Right cardiac atrium (tissue), 5 donors: ENCODE measurements at regions of chr5 and their contacts with region 1.

Region 1: GRCh38 chr5:671459-672328 is 21.5 kb downstream of the TPPP start:
- DNase-seq: peak; percentile 83 to 93 (median 92)
- ATAC-seq: peak; percentile 78 to 82
- H3K4me3 ChIP-seq: no peak overlapping the region
- H3K27ac ChIP-seq: no peak overlapping the region
- H3K4me1 ChIP-seq: peaks cover 7% of the 10 kb centered on the region
- H3K27me3 ChIP-seq: no peaks in the 10 kb centered on the region

Region 2: DNA sequence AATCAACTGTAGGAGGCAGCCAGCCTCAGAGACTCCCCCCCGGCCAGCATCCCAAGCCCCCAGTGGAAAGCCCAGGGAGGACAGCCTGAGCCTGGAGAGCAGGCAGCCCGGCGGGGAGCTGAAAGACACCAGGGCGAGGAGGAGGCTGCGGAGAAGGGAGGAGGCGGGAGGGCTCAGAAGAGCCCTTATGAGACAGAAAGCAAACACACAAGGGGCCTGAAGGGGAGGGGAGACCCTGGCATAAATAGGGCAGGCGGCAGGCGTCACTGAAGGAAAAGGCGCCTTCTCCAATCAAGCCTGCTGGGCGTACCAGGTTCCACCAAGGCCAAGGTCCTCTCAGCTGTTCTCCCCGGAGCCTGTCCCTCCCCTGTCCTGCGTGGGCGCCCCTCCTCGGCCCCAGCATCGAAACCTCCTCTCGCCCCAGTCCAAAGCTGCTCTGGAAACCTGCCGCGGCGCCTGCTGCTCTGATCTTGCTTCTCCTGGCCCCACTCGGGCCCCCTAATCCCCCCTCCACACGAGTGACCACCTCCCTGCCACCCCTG is 148.7 kb before region 1 on chr5:
- intact Hi-C with region 1: no loop called
- DNase-seq: peak in 2 of 3 donors; percentile 34 to 49
- ATAC-seq: no peak
- H3K4me3 ChIP-seq: peak overlapping the region; percentile 21
- H3K27ac ChIP-seq: no peak overlapping the region
- H3K4me1 ChIP-seq: no peaks in the 10 kb centered on the region
- H3K27me3 ChIP-seq: no peaks in the 10 kb centered on the region

Region 3: DNA sequence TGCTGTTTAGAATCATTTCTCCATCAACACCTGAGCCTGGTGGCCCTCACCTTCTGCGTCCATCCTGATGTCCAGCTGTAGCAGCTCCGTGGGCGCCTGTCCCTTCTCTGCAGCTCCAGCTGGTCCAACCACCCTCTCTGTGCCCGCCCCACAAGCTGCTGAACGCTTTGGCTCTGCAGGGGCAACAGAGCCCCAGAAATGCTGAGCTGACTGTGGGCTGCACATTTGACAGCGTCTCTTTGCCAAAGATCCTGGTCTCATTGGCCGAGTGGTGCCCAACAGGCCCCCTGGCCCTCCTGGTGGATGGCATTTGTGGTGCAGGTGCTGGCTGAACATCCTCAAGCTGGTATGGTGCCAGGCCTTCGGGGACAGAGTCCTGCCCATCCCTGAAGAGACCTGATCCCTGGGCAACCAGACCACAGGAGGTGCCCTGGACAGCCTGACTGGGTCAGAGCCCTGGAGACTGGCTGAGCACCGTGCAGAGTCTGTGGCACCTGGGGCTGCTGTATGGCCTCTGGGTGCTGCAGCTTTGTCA is 84.9 kb before region 1 on chr5:
- intact Hi-C with region 1: no loop called
- DNase-seq: no peak
- ATAC-seq: peak in 1 of 2 donors; percentile 11
- H3K4me3 ChIP-seq: no peak overlapping the region
- H3K27ac ChIP-seq: no peak overlapping the region
- H3K4me1 ChIP-seq: no peaks in the 10 kb centered on the region
- H3K27me3 ChIP-seq: no peaks in the 10 kb centered on the region

Region 4: DNA sequence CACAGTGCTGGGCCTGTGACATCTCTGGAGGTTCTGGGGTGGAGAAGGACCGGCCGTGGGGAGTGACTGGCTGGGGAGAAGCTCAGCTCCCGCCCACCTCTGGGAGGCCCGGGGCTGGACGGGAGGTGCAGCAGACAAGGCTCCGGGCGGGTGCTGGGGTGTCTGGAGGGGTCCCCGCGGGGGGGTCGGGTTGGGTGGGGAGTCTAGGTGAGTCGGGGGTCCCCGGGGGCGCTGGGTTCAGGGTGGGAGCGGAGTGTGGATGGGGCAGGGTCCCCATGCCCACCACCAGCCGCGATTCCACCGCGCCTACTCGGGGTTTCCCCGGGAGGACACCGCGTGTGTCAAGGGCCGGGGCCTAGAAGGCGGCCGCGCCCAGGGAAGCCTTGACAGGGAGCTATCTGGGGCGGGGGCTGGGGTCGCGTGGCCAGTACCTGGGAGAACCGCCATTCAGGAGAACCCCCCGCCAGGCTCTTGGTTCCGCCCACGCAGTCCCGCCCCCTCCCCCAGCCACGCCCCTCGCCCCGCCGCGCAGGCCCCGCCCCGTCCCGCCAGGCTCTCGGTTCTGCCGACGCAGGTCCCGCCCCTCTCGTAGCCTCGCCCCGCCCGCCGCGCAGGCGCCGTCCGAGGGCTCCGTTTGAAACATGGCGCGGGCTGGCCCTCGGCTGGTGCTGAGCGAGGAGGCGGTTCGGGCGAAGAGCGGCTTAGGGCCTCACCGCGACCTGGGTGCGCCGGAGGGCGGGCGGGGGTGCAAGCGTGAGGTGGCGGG is 59.8 kb before region 1 on chr5 and contains the start of gene CEP72:
- intact Hi-C with region 1: no loop called
- DNase-seq: peak; percentile 90 to 97 (median 96)
- ATAC-seq: peak; percentile 98
- H3K4me3 ChIP-seq: peak within 1 kb of the TSS; percentile 68
- H3K27ac ChIP-seq: no peak within 1 kb of the TSS
- H3K4me1 ChIP-seq: no peaks in the 10 kb centered on the region
- H3K27me3 ChIP-seq: no peaks in the 10 kb centered on the region
- total RNA-seq, gene CEP72: 1.2 to 3.4 (median 2.2) TPM

Region 5: DNA sequence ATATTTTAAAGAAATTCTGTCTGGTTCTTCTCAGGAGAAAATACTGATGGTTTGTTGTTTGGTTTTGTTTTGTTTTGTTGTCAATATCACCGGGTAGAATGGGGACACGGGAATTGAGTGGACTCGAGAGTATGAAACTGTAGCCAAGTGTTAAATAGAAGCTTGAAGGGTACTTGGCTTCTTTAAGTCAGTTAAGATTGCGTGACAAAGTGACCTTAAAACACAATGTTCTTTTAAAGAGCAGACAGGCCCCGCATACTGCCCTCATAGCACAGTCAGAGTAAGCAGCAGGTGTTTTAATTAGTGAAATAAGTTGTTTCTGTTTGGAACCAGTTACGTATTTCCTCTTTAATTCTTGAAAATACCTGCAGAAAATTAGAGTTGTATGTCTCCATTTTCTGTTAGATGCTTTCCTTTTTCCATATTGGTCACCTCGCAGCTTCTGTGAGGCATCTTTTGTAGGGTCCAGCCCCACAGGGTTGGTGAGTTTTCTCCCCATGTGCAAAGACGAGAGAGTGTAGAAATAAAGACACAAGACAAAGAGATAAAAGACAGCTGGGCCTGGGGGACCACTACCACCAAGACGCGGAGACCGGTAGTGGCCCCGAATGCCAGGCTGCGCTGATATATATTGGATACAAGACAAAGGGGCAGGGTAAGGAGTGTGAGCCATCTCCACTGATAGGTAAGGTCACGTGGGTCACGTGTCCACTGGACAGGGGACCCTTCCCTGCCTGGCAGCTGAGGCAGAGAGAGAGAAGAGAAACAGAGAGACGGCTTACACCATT is 230.6 kb after region 1 on chr5:
- intact Hi-C with region 1: loop called (anchors 5 kb)
- DNase-seq: peak in 1 of 3 donors; percentile 28
- ATAC-seq: no peak
- H3K4me3 ChIP-seq: no peak overlapping the region
- H3K27ac ChIP-seq: no peak overlapping the region
- H3K4me1 ChIP-seq: no peaks in the 10 kb centered on the region
- H3K27me3 ChIP-seq: no peaks in the 10 kb centered on the region